ENCODE measurements at regions of chr6 and their contacts with region 1.

Region 1: GRCh38 chr6:88141561-88142296 is 24.4 kb downstream of the CNR1 start:
- DNase-seq: peak; percentile 91
- ATAC-seq: peak; percentile 91
- H3K4me3 ChIP-seq: peak overlapping the region in 2 of 5 experiments; percentile 30 to 33
- H3K4me3 Mint-ChIP-seq: peak overlapping the region; percentile 67
- H3K27ac ChIP-seq: peak overlapping the region; percentile 87 to 95
- H3K27ac Mint-ChIP-seq: peak overlapping the region; percentile 96
- H3K4me1 ChIP-seq: peaks cover 45 to 49% of the 10 kb centered on the region in 2 donors
- H3K4me1 Mint-ChIP-seq: peaks cover 56% of the 10 kb centered on the region
- H3K27me3 ChIP-seq: no peaks in the 10 kb centered on the region
- H3K27me3 Mint-ChIP-seq: no peaks in the 10 kb centered on the region
- CTCF ChIP-seq: no peak

Region 2: DNA sequence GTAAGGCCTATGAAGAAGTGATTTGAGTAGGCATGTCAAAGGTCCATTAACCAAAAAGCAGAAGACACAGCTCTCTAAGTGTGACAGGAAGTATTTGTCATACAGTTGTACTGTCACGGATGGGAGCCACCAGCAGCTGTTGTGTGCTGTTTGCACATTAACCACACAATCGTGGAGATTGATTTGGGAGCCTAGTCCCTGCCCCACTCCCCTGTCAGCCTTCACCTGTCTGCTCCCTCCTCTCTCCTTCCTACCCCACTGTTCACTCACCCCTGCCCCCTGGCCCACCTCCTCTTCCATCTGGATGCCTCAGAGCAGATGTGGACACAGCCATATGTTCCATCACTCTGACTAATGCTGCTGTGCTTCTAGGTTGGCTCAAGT is 218.8 kb before region 1 on chr6:
- CTCF ChIA-PET with region 1: interaction called, 7 read pairs
- POLR2A ChIA-PET with region 1: interaction called, 3 read pairs
- intact Hi-C with region 1: loop called (anchors 1 kb)
- DNase-seq: peak; percentile 86
- ATAC-seq: peak; percentile 77
- H3K4me3 ChIP-seq: no peak overlapping the region
- H3K4me3 Mint-ChIP-seq: peak overlapping the region; percentile 63
- H3K27ac ChIP-seq: peak overlapping the region; percentile 63 to 91
- H3K27ac Mint-ChIP-seq: peak overlapping the region; percentile 92
- H3K4me1 ChIP-seq: peaks cover 90% of the 10 kb centered on the region in 2 donors
- H3K4me1 Mint-ChIP-seq: peaks cover 91% of the 10 kb centered on the region
- H3K27me3 ChIP-seq: no peaks in the 10 kb centered on the region
- H3K27me3 Mint-ChIP-seq: no peaks in the 10 kb centered on the region
- CTCF ChIP-seq: no peak

Region 3: GRCh38 chr6:88114838-88115237 is 26.9 kb before region 1 on chr6:
- CTCF ChIA-PET with region 1: interaction called, 3 read pairs
- POLR2A ChIA-PET with region 1: no interaction called
- intact Hi-C with region 1: loop called (anchors 1 kb)
- DNase-seq: peak; percentile 38
- ATAC-seq: peak; percentile 60
- H3K4me3 ChIP-seq: no peak overlapping the region
- H3K4me3 Mint-ChIP-seq: peak overlapping the region; percentile 5
- H3K27ac ChIP-seq: peak overlapping the region in 1 of 2 donors; percentile 65
- H3K27ac Mint-ChIP-seq: peak overlapping the region; percentile 57
- H3K4me1 ChIP-seq: peaks cover 18 to 19% of the 10 kb centered on the region in 2 donors
- H3K4me1 Mint-ChIP-seq: peaks cover 20% of the 10 kb centered on the region
- H3K27me3 ChIP-seq: peaks cover 0 to 2% (median 0%) of the 10 kb centered on the region in 4 experiments
- H3K27me3 Mint-ChIP-seq: peaks cover 7% of the 10 kb centered on the region
- CTCF ChIP-seq: no peak

Region 4: DNA sequence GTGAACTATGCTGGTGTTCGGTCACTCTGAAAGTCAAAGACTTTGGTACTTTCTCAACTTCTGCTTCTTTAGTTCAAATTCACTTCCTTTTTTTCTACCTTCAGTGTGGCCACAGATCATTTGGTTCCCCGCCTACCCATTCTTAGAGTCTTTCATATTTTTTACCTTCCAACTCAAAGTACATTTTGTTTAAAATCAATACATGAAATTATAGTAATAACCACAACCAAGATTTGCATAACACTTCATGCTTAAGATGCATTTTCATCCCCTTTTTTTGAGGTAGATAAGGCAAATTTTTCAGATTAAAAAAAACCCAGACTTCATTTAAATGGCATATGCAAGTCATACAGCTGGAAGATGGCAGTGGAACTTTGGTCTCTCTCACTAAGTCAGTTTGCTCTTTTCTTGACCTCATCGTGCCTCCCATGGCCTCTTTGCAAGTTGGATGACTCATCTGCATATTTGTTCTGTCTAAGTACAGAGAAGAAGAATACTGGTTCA is 36.3 kb after region 1 on chr6:
- CTCF ChIA-PET with region 1: interaction called, 6 read pairs
- POLR2A ChIA-PET with region 1: interaction called, 7 read pairs
- intact Hi-C with region 1: loop called (anchors 1 kb)
- DNase-seq: peak; percentile 79
- ATAC-seq: peak; percentile 61
- H3K4me3 ChIP-seq: peak overlapping the region in 1 of 5 experiments; percentile 45
- H3K4me3 Mint-ChIP-seq: peak overlapping the region; percentile 57
- H3K27ac ChIP-seq: peak overlapping the region; percentile 61 to 85
- H3K27ac Mint-ChIP-seq: peak overlapping the region; percentile 81
- H3K4me1 ChIP-seq: peaks cover 52 to 63% of the 10 kb centered on the region in 2 donors
- H3K4me1 Mint-ChIP-seq: peaks cover 58% of the 10 kb centered on the region
- H3K27me3 ChIP-seq: no peaks in the 10 kb centered on the region
- H3K27me3 Mint-ChIP-seq: no peaks in the 10 kb centered on the region
- CTCF ChIP-seq: no peak

Measured in B cell (primary cell).